Mammary epithelial cell (primary cell): ENCODE measurements at regions of chr3 and their contacts with region 1.

Region 1: GRCh38 chr3:141940204-141940776 is 63.8 kb downstream of the ATP1B3 start:
- DNase-seq: peak; percentile 99
- H3K4me3 ChIP-seq: no peak overlapping the region
- H3K27ac ChIP-seq: peak overlapping the region; percentile 64
- H3K4me1 ChIP-seq: peaks cover 34% of the 10 kb centered on the region
- H3K27me3 ChIP-seq: no peaks in the 10 kb centered on the region
- CTCF ChIP-seq: no peak

Region 2: GRCh38 chr3:141830508-141830907 is 109.8 kb before region 1 on chr3:
- CTCF ChIA-PET with region 1: no interaction called
- dilution Hi-C with region 1: no loop called
- in situ Hi-C with region 1: no loop called
- intact Hi-C with region 1: loop called (anchors 1 kb)
- DNase-seq: peak; percentile 97
- H3K4me3 ChIP-seq: no peak overlapping the region
- H3K27ac ChIP-seq: peak overlapping the region; percentile 88
- H3K4me1 ChIP-seq: peaks cover 37% of the 10 kb centered on the region
- H3K27me3 ChIP-seq: no peaks in the 10 kb centered on the region
- CTCF ChIP-seq: no peak

Region 3: DNA sequence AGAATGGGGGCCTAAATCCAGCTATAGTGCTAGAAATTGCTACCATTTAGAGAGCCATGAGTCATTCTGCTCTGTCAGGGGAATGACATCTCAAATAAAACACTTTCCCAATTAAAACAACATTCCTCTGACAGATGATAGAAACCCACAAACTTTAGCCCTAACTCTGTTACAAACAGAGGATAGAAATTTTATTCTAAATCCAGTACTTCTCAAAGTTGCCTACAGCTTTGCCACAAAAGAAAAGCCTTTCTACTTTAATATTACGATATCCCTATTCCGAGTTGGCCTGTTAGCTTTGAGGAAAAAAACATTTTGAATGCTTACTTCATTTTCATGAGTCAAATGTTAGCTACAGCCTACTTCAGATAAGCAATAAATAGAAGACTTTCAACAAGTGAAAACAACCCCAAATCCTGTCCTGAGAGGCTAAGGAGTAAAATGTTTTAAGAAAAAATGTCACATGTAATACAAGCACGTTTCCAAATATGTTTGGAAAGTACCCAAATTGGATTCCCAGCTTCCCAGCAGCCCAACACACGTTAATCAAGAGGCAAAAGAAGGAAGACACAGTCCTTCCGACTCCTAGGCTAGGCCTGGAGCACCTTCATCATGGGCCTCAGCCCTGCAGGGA is 19.7 kb after region 1 on chr3:
- CTCF ChIA-PET with region 1: no interaction called
- dilution Hi-C with region 1: no loop called
- in situ Hi-C with region 1: no loop called
- intact Hi-C with region 1: loop called (anchors 1 kb)
- DNase-seq: peak; percentile 61
- H3K4me3 ChIP-seq: no peak overlapping the region
- H3K27ac ChIP-seq: peak overlapping the region; percentile 57
- H3K4me1 ChIP-seq: peaks cover 21% of the 10 kb centered on the region
- H3K27me3 ChIP-seq: no peaks in the 10 kb centered on the region
- CTCF ChIP-seq: no peak